CD4-positive, alpha-beta T cell (primary cell): ENCODE measurements at regions of chr12 and their contacts with region 1.

Region 1: GRCh38 chr12:779745-780734 is 27.7 kb downstream of the WNK1 start:
- DNase-seq: peak in 1 of 14 experiments; percentile 30
- ATAC-seq: peak; percentile 63
- H3K4me3 ChIP-seq: peak overlapping the region; percentile 21
- H3K4me3 Mint-ChIP-seq: peak overlapping the region; percentile 88
- H3K27ac ChIP-seq: no peak overlapping the region
- H3K27ac Mint-ChIP-seq: peak overlapping the region; percentile 43
- H3K4me1 ChIP-seq: peaks cover 39% of the 10 kb centered on the region
- H3K4me1 Mint-ChIP-seq: peaks cover 76% of the 10 kb centered on the region
- H3K27me3 ChIP-seq: no peaks in the 10 kb centered on the region
- H3K27me3 Mint-ChIP-seq: no peaks in the 10 kb centered on the region
- CTCF ChIP-seq: no peak

Region 2: DNA sequence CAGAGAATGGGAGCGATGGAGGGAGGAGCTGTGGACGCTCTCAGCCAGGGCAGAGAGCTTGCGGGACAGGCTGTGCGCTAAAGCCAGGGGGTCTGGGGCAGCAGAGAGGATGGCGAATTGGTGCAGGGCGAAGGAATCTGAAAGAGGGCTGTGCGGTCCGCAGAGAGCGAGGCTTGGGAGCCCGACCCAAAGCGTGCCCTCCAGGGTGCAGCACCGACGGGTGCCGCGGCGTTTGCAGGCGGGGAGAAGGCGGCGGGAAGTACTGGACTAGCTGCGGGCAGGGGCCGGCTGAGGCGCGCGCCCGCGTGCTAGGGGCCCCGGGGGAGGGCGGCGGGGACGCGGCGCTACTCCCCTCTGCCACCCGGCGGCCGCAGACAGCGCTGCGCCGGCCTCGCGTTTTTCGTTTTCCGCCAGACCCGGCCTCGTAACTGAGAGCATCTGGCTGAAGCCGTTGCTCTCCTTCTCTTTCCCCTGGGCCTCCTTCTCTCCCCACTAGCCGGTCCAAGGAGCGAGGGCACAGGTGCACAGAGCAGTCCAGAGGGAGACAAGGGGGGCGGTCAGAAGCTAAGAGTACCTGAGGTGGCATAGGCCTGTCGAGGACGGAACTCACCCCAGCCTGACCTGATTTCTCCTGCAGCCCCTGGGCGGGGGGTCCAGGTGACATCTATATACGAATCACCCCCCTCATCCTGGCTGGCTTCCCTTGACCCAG is 591.0 kb before region 1 on chr12:
- CTCF ChIA-PET with region 1: no interaction called
- POLR2A ChIA-PET with region 1: no interaction called
- intact Hi-C with region 1: no loop called
- DNase-seq: peak in 11 of 14 experiments; percentile 3 to 54 (median 14)
- ATAC-seq: peak; percentile 67
- H3K4me3 ChIP-seq: peak overlapping the region; percentile 31
- H3K4me3 Mint-ChIP-seq: peak overlapping the region; percentile 88
- H3K27ac ChIP-seq: no peak overlapping the region
- H3K27ac Mint-ChIP-seq: no peak overlapping the region
- H3K4me1 ChIP-seq: peaks cover 5% of the 10 kb centered on the region
- H3K4me1 Mint-ChIP-seq: no peaks in the 10 kb centered on the region
- H3K27me3 ChIP-seq: peaks cover 0 to 15% of the 10 kb centered on the region in 2 experiments
- H3K27me3 Mint-ChIP-seq: peaks cover 52% of the 10 kb centered on the region
- CTCF ChIP-seq: peak; percentile 55

Region 3: GRCh38 chr12:795305-795704 is 15.3 kb after region 1 on chr12:
- CTCF ChIA-PET with region 1: interaction called, 3 read pairs
- POLR2A ChIA-PET with region 1: interaction called, 10 read pairs
- intact Hi-C with region 1: no loop called
- DNase-seq: peak in 9 of 14 experiments; percentile 5 to 57 (median 17)
- ATAC-seq: peak; percentile 66
- H3K4me3 ChIP-seq: no peak overlapping the region
- H3K4me3 Mint-ChIP-seq: peak overlapping the region; percentile 45
- H3K27ac ChIP-seq: no peak overlapping the region
- H3K27ac Mint-ChIP-seq: peak overlapping the region; percentile 39
- H3K4me1 ChIP-seq: peaks cover 33% of the 10 kb centered on the region
- H3K4me1 Mint-ChIP-seq: peaks cover 85% of the 10 kb centered on the region
- H3K27me3 ChIP-seq: no peaks in the 10 kb centered on the region
- H3K27me3 Mint-ChIP-seq: no peaks in the 10 kb centered on the region
- CTCF ChIP-seq: no peak

Region 4: GRCh38 chr12:1429980-1430379 is 649.9 kb after region 1 on chr12:
- CTCF ChIA-PET with region 1: no interaction called
- POLR2A ChIA-PET with region 1: no interaction called
- intact Hi-C with region 1: no loop called
- DNase-seq: no peak
- ATAC-seq: no peak
- H3K4me3 ChIP-seq: no peak overlapping the region
- H3K4me3 Mint-ChIP-seq: no peak overlapping the region
- H3K27ac ChIP-seq: no peak overlapping the region
- H3K27ac Mint-ChIP-seq: no peak overlapping the region
- H3K4me1 ChIP-seq: no peaks in the 10 kb centered on the region
- H3K4me1 Mint-ChIP-seq: no peaks in the 10 kb centered on the region
- H3K27me3 ChIP-seq: no peaks in the 10 kb centered on the region
- H3K27me3 Mint-ChIP-seq: no peaks in the 10 kb centered on the region
- CTCF ChIP-seq: no peak